Psoas muscle (tissue), 8 donors: ENCODE measurements at regions of chr9 and their contacts with region 1.

Region 1: DNA sequence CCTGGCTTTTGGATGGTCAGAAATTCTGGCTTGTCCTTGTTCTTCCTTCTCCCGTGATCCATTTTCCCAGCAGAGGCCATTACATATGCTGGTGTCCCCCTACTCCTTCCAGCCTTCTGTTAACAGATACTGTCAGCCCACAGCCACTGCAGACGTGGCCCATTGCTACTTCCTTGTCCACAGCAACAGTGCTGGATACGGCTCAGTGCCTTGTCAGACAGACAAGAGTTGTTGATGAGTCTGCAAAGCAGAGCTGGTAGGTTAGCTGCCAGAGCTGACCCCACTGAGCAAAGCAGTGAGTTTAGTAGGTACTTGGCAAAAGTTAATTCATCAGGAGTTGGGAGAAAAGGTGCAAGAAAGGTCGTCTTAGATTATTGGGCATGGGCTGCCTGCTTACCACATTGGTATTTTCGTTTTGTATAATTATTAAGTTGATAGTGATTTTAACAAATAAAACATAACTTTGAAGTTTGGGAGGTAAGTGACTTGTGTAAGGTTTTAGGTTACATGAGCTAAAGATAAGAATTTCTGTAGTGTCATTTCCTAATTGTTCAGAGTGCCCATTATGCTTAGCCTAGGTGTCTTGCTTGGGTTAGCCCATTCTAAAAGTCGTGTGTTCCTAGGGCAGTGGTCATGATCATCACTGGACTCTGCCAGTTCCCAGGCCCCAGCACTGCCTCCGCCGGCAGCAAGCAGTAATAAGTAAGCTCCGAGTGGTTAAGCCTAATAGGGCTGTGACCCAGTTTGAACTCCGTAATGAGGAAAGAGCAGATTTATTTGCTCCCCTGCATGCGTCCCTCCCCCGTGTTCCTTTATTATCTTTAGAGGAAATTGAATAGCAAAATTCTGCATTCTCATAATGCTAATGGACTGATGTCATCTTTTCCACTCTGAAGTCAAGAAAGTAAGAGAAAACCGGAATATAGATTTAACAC is 292.0 kb downstream of the FANCC start:
- DNase-seq: peak; percentile 68 to 83
- ATAC-seq: peak; percentile 75 to 84 (median 82)
- H3K4me3 ChIP-seq: peak overlapping the region; percentile 24
- H3K27ac ChIP-seq: peak overlapping the region; percentile 93
- H3K4me1 ChIP-seq: peaks cover 100% of the 10 kb centered on the region
- H3K27me3 ChIP-seq: no peaks in the 10 kb centered on the region
- CTCF ChIP-seq: peak; percentile 45

Region 2: GRCh38 chr9:94603259-94604160 is 422.0 kb before region 1 on chr9:
- intact Hi-C with region 1: no loop called
- DNase-seq: peak; percentile 64 to 80
- ATAC-seq: peak; percentile 49 to 68 (median 64)
- H3K4me3 ChIP-seq: no peak overlapping the region
- H3K27ac ChIP-seq: no peak overlapping the region
- H3K4me1 ChIP-seq: peaks cover 5% of the 10 kb centered on the region
- H3K27me3 ChIP-seq: peaks cover 0 to 2% (median 0%) of the 10 kb centered on the region in 3 donors
- CTCF ChIP-seq: peak; percentile 71

Region 3: DNA sequence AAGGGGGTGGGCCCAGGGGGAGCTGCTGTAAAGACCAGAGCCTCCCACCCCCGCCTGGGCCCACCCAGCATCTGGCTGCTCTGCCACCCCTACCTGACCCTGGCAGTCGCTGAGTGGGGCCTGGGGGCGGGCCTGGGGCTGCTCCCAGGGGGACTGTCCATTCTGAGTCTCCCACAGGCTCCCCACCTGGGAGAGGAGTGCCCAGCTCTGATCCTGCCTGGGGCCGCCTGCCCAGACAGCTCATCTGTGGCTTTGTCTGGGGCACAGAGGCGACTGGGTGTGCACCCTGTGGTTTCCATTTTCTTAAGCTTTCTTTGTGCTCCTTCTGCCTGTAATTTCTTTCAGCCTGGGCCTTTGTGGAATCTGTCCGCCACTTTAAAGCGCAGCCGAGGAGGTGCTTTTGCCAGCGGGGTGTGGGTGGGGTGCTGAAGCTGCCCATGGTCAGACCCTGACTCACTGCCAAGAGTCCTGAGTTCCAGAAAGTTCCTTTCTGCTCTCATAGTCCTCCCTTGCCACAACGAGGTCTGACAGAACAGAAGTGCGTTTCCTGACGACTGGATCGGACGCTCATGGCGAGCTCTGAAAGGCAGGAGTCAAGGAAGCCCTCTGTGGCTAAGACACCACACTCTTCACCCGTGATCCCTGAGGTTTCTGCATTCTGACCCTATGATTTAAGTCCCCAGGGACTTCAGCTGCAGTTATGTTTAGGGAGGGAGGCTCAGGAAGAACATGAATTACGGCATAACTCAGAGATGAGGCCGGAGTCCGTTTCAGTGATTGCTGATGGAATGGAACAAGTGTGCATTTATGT is 67.0 kb after region 1 on chr9:
- intact Hi-C with region 1: loop called in 1 of 2 experiments (anchors 5 kb)
- DNase-seq: no peak
- ATAC-seq: peak; percentile 8 to 27 (median 14)
- H3K4me3 ChIP-seq: no peak overlapping the region
- H3K27ac ChIP-seq: peak overlapping the region; percentile 89
- H3K4me1 ChIP-seq: peaks cover 74% of the 10 kb centered on the region
- H3K27me3 ChIP-seq: no peaks in the 10 kb centered on the region
- CTCF ChIP-seq: no peak

Region 4: GRCh38 chr9:95103385-95103784 is 77.9 kb after region 1 on chr9:
- intact Hi-C with region 1: no loop called
- DNase-seq: no peak
- ATAC-seq: peak in 2 of 4 donors; percentile 23 to 38
- H3K4me3 ChIP-seq: no peak overlapping the region
- H3K27ac ChIP-seq: peak overlapping the region; percentile 37
- H3K4me1 ChIP-seq: peaks cover 26% of the 10 kb centered on the region
- H3K27me3 ChIP-seq: no peaks in the 10 kb centered on the region
- CTCF ChIP-seq: no peak

Region 5: DNA sequence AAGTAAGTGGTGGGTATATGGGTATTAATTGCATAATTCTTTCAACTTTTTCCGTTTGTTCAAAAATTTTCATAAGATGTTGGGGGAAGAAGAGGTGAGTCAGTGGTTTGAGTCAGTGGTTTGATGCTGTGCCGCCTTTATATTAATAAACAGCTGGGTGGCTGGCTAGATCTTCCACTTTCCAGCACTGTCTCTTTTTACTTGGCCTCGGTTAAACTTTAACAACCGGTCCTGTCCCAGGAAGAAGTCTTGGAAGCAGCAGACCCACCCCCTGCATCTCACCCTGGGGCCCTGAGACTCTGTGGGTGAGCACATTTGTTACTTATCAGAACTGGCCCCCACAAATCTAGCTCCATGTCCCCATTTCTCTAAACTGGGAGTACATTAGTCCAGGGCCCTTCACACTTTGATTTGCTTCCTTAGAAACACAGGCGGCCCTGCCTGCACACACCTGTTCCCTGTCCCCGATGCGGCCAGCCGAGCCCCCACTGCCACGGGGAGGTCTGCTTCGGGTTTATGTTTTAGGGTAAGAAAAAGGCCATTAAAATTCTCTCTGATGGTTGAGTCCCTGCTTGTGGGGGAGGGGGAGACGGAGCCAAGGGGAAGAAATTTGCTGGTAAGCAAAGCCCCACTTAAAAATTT is 400.6 kb after region 1 on chr9:
- intact Hi-C with region 1: no loop called
- DNase-seq: no peak
- ATAC-seq: peak in 3 of 4 donors; percentile 24 to 57 (median 40)
- H3K4me3 ChIP-seq: peak overlapping the region; percentile 65
- H3K27ac ChIP-seq: peak overlapping the region; percentile 88
- H3K4me1 ChIP-seq: no peaks in the 10 kb centered on the region
- H3K27me3 ChIP-seq: no peaks in the 10 kb centered on the region
- CTCF ChIP-seq: no peak